CD8-positive, alpha-beta T cell (primary cell): ENCODE measurements at regions of chr10 and their contacts with region 1.

Region 1: GRCh38 chr10:97869091-97870042 is 19.7 kb downstream of the GOLGA7B start:
- DNase-seq: peak; percentile 65 to 93 (median 85)
- ATAC-seq: peak; percentile 99
- H3K4me3 ChIP-seq: peak overlapping the region; percentile 11 to 18
- H3K4me3 Mint-ChIP-seq: peak overlapping the region; percentile 43
- H3K27ac ChIP-seq: peak overlapping the region in 1 of 2 experiments; percentile 18
- H3K27ac Mint-ChIP-seq: peak overlapping the region; percentile 55
- H3K4me1 ChIP-seq: peaks cover 16% of the 10 kb centered on the region
- H3K4me1 Mint-ChIP-seq: peaks cover 12% of the 10 kb centered on the region
- H3K27me3 ChIP-seq: no peaks in the 10 kb centered on the region
- H3K27me3 Mint-ChIP-seq: peaks cover 8% of the 10 kb centered on the region
- CTCF ChIP-seq: peak; percentile 77

Region 2: GRCh38 chr10:97676770-97677581 is 192.4 kb before region 1 on chr10:
- CTCF ChIA-PET with region 1: interaction called, 3 read pairs
- POLR2A ChIA-PET with region 1: no interaction called
- intact Hi-C with region 1: loop called (anchors 1 to 2 kb)
- DNase-seq: peak in 8 of 9 experiments; percentile 27 to 79 (median 56)
- ATAC-seq: peak; percentile 97
- H3K4me3 ChIP-seq: no peak overlapping the region
- H3K4me3 Mint-ChIP-seq: no peak overlapping the region
- H3K27ac ChIP-seq: no peak overlapping the region
- H3K27ac Mint-ChIP-seq: no peak overlapping the region
- H3K4me1 ChIP-seq: no peaks in the 10 kb centered on the region
- H3K4me1 Mint-ChIP-seq: no peaks in the 10 kb centered on the region
- H3K27me3 ChIP-seq: no peaks in the 10 kb centered on the region
- H3K27me3 Mint-ChIP-seq: no peaks in the 10 kb centered on the region
- CTCF ChIP-seq: peak; percentile 91

Region 3: DNA sequence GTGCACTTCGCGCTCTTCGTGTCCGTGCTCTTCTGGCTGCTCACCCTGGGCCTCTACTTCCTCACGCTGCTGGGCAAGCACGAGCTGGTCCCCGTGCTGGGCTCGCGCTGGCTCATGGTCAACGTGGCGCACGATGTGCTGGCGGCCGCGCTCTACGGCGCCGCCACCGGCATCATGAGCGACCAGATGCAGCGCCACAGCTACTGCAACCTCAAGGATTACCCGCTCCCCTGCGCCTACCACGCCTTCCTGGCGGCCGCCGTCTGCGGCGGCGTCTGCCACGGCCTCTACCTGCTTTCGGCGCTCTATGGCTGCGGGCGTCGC is 155.4 kb before region 1 on chr10:
- CTCF ChIA-PET with region 1: interaction called, 9 read pairs
- POLR2A ChIA-PET with region 1: interaction called, 3 read pairs
- intact Hi-C with region 1: loop called (anchors 1 kb)
- DNase-seq: peak in 8 of 9 experiments; percentile 19 to 82 (median 59)
- ATAC-seq: peak; percentile 83
- H3K4me3 ChIP-seq: peak overlapping the region; percentile 57 to 63
- H3K4me3 Mint-ChIP-seq: peak overlapping the region; percentile 99
- H3K27ac ChIP-seq: no peak overlapping the region
- H3K27ac Mint-ChIP-seq: peak overlapping the region; percentile 82
- H3K4me1 ChIP-seq: peaks cover 9% of the 10 kb centered on the region
- H3K4me1 Mint-ChIP-seq: peaks cover 15% of the 10 kb centered on the region
- H3K27me3 ChIP-seq: peaks cover 0 to 3% of the 10 kb centered on the region in 2 experiments
- H3K27me3 Mint-ChIP-seq: peaks cover 17% of the 10 kb centered on the region
- CTCF ChIP-seq: no peak

Region 4: GRCh38 chr10:97759158-97759887 is 110.0 kb before region 1 on chr10:
- CTCF ChIA-PET with region 1: interaction called, 113 read pairs
- POLR2A ChIA-PET with region 1: interaction called, 4 read pairs
- intact Hi-C with region 1: loop called in 1 of 2 experiments (anchors 1 kb)
- DNase-seq: peak in 8 of 9 experiments; percentile 27 to 76 (median 58)
- ATAC-seq: peak; percentile 71
- H3K4me3 ChIP-seq: no peak overlapping the region
- H3K4me3 Mint-ChIP-seq: no peak overlapping the region
- H3K27ac ChIP-seq: no peak overlapping the region
- H3K27ac Mint-ChIP-seq: no peak overlapping the region
- H3K4me1 ChIP-seq: peaks cover 7% of the 10 kb centered on the region
- H3K4me1 Mint-ChIP-seq: peaks cover 3% of the 10 kb centered on the region
- H3K27me3 ChIP-seq: no peaks in the 10 kb centered on the region
- H3K27me3 Mint-ChIP-seq: no peaks in the 10 kb centered on the region
- CTCF ChIP-seq: peak; percentile 50

Region 5: GRCh38 chr10:97792141-97792721 is 77.1 kb before region 1 on chr10:
- CTCF ChIA-PET with region 1: interaction called, 292 read pairs
- POLR2A ChIA-PET with region 1: interaction called, 9 read pairs
- intact Hi-C with region 1: loop called (anchors 1 kb)
- DNase-seq: peak; percentile 42 to 85 (median 72)
- ATAC-seq: peak; percentile 77
- H3K4me3 ChIP-seq: no peak overlapping the region
- H3K4me3 Mint-ChIP-seq: no peak overlapping the region
- H3K27ac ChIP-seq: no peak overlapping the region
- H3K27ac Mint-ChIP-seq: no peak overlapping the region
- H3K4me1 ChIP-seq: peaks cover 47% of the 10 kb centered on the region
- H3K4me1 Mint-ChIP-seq: peaks cover 46% of the 10 kb centered on the region
- H3K27me3 ChIP-seq: no peaks in the 10 kb centered on the region
- H3K27me3 Mint-ChIP-seq: peaks cover 3% of the 10 kb centered on the region
- CTCF ChIP-seq: peak; percentile 77

Region 6: GRCh38 chr10:97849687-97850402 is 19.5 kb before region 1 on chr10 and contains the start of gene GOLGA7B:
- CTCF ChIA-PET with region 1: interaction called, 45 read pairs
- POLR2A ChIA-PET with region 1: interaction called, 3 read pairs
- intact Hi-C with region 1: loop called (anchors 1 to 2 kb)
- DNase-seq: peak; percentile 23 to 80 (median 69)
- ATAC-seq: peak; percentile 84
- H3K4me3 ChIP-seq: peak within 1 kb of the TSS; percentile 70 to 87
- H3K4me3 Mint-ChIP-seq: peak within 1 kb of the TSS; percentile 84
- H3K27ac ChIP-seq: peak within 1 kb of the TSS in 1 of 2 experiments; percentile 22
- H3K27ac Mint-ChIP-seq: peak within 1 kb of the TSS; percentile 84
- H3K4me1 ChIP-seq: peaks cover 31% of the 10 kb centered on the region
- H3K4me1 Mint-ChIP-seq: peaks cover 39% of the 10 kb centered on the region
- H3K27me3 ChIP-seq: no peaks in the 10 kb centered on the region
- H3K27me3 Mint-ChIP-seq: no peaks in the 10 kb centered on the region
- CTCF ChIP-seq: no peak
- total RNA-seq, gene GOLGA7B: 3.5 to 5.1 TPM